ENCODE measurements at regions of chr3 and their contacts with region 1.

Region 1: GRCh38 chr3:53555068-53555588 is 60.7 kb downstream of the CACNA1D start:
- DNase-seq: peak; percentile 83
- ATAC-seq: peak; percentile 95
- H3K4me3 ChIP-seq: no peak overlapping the region
- H3K27ac ChIP-seq: peak overlapping the region; percentile 76
- H3K4me1 ChIP-seq: peaks cover 13% of the 10 kb centered on the region
- H3K27me3 ChIP-seq: no peaks in the 10 kb centered on the region
- CTCF ChIP-seq: no peak
- EP300 ChIP-seq: peak; percentile 50 to 74; a peak in 3 of 4 replicates
- POLR2A ChIP-seq: no peak
- RAD21 ChIP-seq: no peak

Region 2: DNA sequence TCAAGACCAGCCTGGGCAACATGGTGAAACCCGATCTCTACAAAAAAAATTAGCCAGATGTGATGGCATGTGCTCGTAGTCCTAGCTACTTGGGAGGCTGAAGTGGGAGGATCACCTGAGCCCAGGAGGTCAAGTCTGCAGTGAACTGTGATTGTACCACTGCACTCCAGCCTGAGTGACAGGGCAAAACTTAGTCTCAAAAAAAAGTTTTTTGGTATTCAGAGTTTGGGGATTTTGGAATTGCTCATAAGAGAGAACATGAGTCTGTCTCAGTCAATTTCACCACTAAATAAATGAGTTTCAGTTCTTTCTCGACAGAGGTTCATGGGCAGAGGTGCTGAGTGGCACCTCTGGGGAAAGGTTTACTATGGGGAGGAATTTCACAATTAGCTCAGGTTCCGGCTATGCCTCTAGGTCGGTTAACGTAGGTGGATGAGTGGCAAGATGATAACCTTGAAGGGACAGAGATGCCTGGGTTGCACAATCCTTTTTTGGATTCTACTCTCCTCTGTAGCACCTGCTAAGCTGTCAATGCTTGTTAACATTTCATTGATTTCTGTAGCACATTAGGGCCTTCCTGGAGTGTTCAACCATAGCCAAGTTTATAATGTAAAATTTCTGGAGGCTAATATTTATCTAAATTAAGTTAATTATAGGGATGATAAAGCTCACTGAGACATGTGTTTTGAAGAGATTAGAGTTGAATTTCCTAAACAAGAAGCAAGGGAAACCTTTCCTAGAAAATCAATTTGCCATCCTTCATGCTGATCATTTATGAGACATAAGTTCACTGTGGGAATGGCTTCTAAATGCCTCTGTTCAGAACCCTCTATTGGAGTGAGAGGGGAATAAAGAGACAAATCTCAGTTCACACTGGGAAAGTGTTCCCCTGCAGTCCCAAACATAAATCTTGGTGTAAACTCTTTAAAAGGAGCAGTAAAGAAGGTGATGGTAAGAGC is 170.4 kb before region 1 on chr3:
- CTCF ChIA-PET with region 1: no interaction called
- POLR2A ChIA-PET with region 1: no interaction called
- RAD21 ChIA-PET with region 1: interaction called, 5 read pairs
- SMC1A ChIA-PET with region 1: interaction called, 11 read pairs
- in situ Hi-C with region 1: no loop called
- intact Hi-C with region 1: no loop called
- DNase-seq: peak; percentile 33
- ATAC-seq: peak; percentile 92
- H3K4me3 ChIP-seq: no peak overlapping the region
- H3K27ac ChIP-seq: no peak overlapping the region
- H3K4me1 ChIP-seq: no peaks in the 10 kb centered on the region
- H3K27me3 ChIP-seq: no peaks in the 10 kb centered on the region
- CTCF ChIP-seq: no peak
- EP300 ChIP-seq: peak in 1 of 2 experiments; percentile 10; a peak in 1 of 4 replicates
- POLR2A ChIP-seq: no peak
- RAD21 ChIP-seq: no peak

Region 3: GRCh38 chr3:53643757-53644156 is 88.6 kb after region 1 on chr3:
- CTCF ChIA-PET with region 1: interaction called, 5 read pairs
- POLR2A ChIA-PET with region 1: interaction called, 6 read pairs
- RAD21 ChIA-PET with region 1: interaction called, 6 read pairs
- SMC1A ChIA-PET with region 1: interaction called, 16 read pairs
- in situ Hi-C with region 1: no loop called
- intact Hi-C with region 1: no loop called
- DNase-seq: no peak
- ATAC-seq: no peak
- H3K4me3 ChIP-seq: no peak overlapping the region
- H3K27ac ChIP-seq: no peak overlapping the region
- H3K4me1 ChIP-seq: no peaks in the 10 kb centered on the region
- H3K27me3 ChIP-seq: no peaks in the 10 kb centered on the region
- CTCF ChIP-seq: peak in 1 of 3 experiments; percentile 14; a peak in 1 of 6 replicates
- EP300 ChIP-seq: no peak
- POLR2A ChIP-seq: no peak
- RAD21 ChIP-seq: no peak

Region 4: GRCh38 chr3:53650424-53650823 is 95.3 kb after region 1 on chr3:
- CTCF ChIA-PET with region 1: interaction called, 5 read pairs
- POLR2A ChIA-PET with region 1: interaction called, 10 read pairs
- RAD21 ChIA-PET with region 1: interaction called, 7 read pairs
- SMC1A ChIA-PET with region 1: interaction called, 16 read pairs
- in situ Hi-C with region 1: no loop called
- intact Hi-C with region 1: loop called (anchors 2 kb)
- DNase-seq: peak; percentile 75
- ATAC-seq: peak; percentile 83
- H3K4me3 ChIP-seq: no peak overlapping the region; the same call in 1 of the 2 replicates
- H3K27ac ChIP-seq: no peak overlapping the region
- H3K4me1 ChIP-seq: peaks cover 12% of the 10 kb centered on the region
- H3K27me3 ChIP-seq: no peaks in the 10 kb centered on the region
- CTCF ChIP-seq: no peak
- EP300 ChIP-seq: peak; percentile 50 to 77; a peak in 3 of 4 replicates
- POLR2A ChIP-seq: no peak
- RAD21 ChIP-seq: no peak

Region 5: DNA sequence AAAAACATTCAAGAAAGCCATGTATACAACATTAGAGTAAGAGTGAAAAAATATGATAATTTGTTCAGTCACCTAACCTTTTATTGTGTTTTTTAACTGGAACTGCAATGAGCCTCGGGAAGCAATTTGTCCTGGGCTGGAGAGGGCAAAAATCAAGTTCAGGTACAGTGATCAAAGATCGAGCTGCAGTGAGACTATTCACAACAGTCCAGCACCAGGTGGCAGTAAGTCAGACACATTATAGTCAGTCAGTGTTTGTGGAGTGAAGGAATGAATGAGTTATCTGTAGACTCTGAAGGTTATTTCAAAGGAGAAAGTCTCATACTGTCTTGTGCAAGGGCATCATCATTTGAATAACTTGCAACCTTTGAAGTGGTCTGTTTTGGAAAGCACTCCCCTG is 174.5 kb after region 1 on chr3:
- CTCF ChIA-PET with region 1: no interaction called
- POLR2A ChIA-PET with region 1: no interaction called
- RAD21 ChIA-PET with region 1: no interaction called
- SMC1A ChIA-PET with region 1: no interaction called
- in situ Hi-C with region 1: no loop called
- intact Hi-C with region 1: no loop called
- DNase-seq: no peak
- ATAC-seq: peak; percentile 91
- H3K4me3 ChIP-seq: no peak overlapping the region
- H3K27ac ChIP-seq: no peak overlapping the region
- H3K4me1 ChIP-seq: peaks cover 10% of the 10 kb centered on the region
- H3K27me3 ChIP-seq: no peaks in the 10 kb centered on the region
- CTCF ChIP-seq: peak; percentile 31 to 52 (median 34); a peak in 5 of 6 replicates
- EP300 ChIP-seq: no peak
- POLR2A ChIP-seq: no peak
- RAD21 ChIP-seq: peak; percentile 43